Natural killer cell (primary cell): ENCODE measurements at regions of chr9 and their contacts with region 1.

Region 1: GRCh38 chr9:136564379-136564988 is 18.6 kb upstream of the NOTCH1 start:
- DNase-seq: peak in 1 of 2 donors; percentile 52
- ATAC-seq: peak; percentile 82 to 90 (median 83)
- H3K4me3 ChIP-seq: no peak overlapping the region
- H3K4me3 Mint-ChIP-seq: peak overlapping the region; percentile 58
- H3K27ac ChIP-seq: peak overlapping the region; percentile 60
- H3K27ac Mint-ChIP-seq: peak overlapping the region; percentile 62 to 75
- H3K4me1 ChIP-seq: peaks cover 74% of the 10 kb centered on the region
- H3K4me1 Mint-ChIP-seq: peaks cover 21 to 45% of the 10 kb centered on the region in 2 donors
- H3K27me3 ChIP-seq: no peaks in the 10 kb centered on the region
- H3K27me3 Mint-ChIP-seq: no peaks in the 10 kb centered on the region
- CTCF ChIP-seq: no peak

Region 2: DNA sequence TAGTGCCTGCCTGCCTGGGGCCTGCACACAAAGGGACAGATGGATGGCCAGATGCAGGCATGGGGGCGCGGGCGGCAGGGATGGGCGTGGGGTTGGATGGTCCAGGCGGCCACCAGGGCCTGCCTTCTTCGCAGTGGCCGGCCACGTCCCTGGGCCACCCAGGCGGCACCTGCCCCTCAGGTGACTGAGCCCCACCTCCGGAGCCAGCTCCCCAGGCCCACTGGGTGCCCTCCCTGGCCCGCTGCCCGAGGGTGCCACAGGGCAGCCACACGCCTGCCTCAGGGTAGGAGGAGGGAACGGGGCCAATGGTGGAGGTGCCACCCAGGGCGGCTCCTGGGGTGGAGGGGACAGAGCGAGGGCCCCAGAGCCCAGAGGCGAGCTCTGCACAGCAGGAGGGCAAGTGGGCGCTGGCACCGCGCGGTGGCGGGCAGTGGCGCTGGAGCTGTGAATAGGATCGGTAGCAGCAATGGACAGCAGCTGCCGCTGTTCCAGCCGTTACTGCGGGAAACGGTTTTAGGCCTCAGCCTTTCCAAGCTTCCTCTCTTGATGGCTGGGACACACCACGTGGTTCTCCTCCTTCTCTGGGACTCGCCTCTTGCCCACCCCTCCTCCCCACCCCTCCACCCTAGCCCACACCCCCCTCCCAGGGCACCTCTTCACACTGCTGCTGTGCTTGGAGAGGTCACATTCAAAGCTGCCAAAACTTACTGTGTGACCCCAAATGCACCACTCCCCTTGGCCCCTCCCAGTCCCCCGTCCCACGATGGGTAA is 378.7 kb before region 1 on chr9:
- intact Hi-C with region 1: no loop called
- DNase-seq: no peak
- ATAC-seq: no peak
- H3K4me3 ChIP-seq: no peak overlapping the region
- H3K4me3 Mint-ChIP-seq: no peak overlapping the region
- H3K27ac ChIP-seq: no peak overlapping the region
- H3K27ac Mint-ChIP-seq: no peak overlapping the region
- H3K4me1 ChIP-seq: no peaks in the 10 kb centered on the region
- H3K4me1 Mint-ChIP-seq: no peaks in the 10 kb centered on the region
- H3K27me3 ChIP-seq: no peaks in the 10 kb centered on the region
- H3K27me3 Mint-ChIP-seq: peaks cover 3 to 18% of the 10 kb centered on the region in 2 donors
- CTCF ChIP-seq: no peak

Region 3: DNA sequence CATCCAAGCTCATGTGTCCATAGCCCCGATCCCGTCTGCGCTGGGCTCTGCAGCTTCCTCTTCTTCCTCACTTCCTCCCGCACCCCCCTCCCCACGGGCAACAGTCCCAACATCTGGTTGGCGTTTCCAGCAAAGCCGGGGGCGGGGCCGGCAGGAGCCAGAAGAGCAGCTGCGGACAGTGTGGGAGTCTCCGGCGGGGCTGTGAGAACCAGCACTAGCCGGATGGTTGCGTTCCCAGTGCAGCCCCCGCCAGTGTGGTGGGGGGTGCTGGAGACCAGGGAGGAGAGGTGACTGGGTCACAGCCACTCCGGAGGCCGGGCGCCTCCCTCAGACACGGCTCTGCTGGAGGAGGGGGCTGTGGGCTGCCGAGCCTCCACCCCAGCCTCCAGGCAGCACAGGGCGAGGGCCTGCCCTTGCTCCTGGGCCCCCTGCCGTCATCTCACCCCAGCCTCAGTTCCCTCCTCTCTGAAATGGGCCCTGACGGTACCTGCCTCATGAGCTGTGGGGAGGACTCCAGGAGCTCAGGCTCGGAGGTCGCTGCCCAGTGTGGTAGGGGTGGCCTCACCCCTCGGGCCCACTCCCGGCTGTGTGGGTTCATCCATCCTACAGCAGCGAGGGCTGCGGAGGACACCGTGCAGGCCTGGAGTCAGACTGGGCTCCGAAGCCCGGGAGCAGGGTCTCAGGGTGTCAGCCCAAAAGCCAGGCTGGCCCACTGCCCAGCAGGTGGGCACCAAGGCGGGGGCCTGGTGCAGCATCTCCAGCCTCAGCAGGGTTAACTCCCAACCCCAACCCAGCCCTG is 22.9 kb after region 1 on chr9:
- intact Hi-C with region 1: no loop called
- DNase-seq: no peak
- ATAC-seq: no peak
- H3K4me3 ChIP-seq: no peak overlapping the region
- H3K4me3 Mint-ChIP-seq: no peak overlapping the region
- H3K27ac ChIP-seq: no peak overlapping the region
- H3K27ac Mint-ChIP-seq: no peak overlapping the region
- H3K4me1 ChIP-seq: peaks cover 29% of the 10 kb centered on the region
- H3K4me1 Mint-ChIP-seq: peaks cover 7 to 13% of the 10 kb centered on the region in 2 donors
- H3K27me3 ChIP-seq: no peaks in the 10 kb centered on the region
- H3K27me3 Mint-ChIP-seq: no peaks in the 10 kb centered on the region
- CTCF ChIP-seq: no peak

Region 4: DNA sequence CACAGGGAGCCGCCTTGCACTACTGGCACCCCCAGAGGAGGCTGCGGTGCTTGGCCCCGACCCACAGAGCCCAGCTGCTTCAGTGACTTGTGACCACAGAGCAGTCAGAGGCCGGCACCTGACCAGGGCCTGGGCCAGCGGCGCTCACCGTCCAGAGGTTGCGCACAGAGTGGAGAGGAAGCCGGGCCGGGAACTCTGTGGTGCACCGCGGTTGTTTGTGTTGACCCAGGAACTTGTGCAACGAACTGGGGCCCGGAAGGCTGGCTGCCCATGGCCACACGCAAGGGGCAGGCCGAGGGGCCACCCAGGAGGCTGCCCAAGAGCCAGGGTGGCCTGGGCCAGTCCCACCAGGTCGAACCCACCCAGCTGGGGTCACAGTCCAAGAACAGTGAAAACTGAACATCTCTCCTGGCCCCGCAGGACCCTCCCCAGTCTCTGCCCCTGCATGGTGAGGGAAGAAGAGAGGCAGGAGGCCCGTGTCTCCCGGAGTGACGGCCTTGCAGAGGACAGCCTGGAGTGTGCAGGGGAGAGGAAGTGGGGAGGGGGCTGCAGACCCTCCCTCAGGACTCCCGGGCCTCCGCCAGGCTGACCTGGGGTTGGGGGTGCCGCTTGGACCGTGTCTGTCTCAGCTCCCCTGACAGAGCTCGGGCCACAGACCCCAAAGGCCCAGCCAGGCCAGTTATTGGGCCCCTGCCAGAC is 55.4 kb after region 1 on chr9:
- intact Hi-C with region 1: loop called (anchors 10 kb)
- DNase-seq: peak; percentile 27 to 46
- ATAC-seq: peak; percentile 29 to 86 (median 59)
- H3K4me3 ChIP-seq: no peak overlapping the region
- H3K4me3 Mint-ChIP-seq: peak overlapping the region; percentile 84
- H3K27ac ChIP-seq: peak overlapping the region; percentile 87
- H3K27ac Mint-ChIP-seq: peak overlapping the region; percentile 87 to 89
- H3K4me1 ChIP-seq: peaks cover 86% of the 10 kb centered on the region
- H3K4me1 Mint-ChIP-seq: peaks cover 48 to 61% of the 10 kb centered on the region in 2 donors
- H3K27me3 ChIP-seq: no peaks in the 10 kb centered on the region
- H3K27me3 Mint-ChIP-seq: no peaks in the 10 kb centered on the region
- CTCF ChIP-seq: no peak

Region 5: DNA sequence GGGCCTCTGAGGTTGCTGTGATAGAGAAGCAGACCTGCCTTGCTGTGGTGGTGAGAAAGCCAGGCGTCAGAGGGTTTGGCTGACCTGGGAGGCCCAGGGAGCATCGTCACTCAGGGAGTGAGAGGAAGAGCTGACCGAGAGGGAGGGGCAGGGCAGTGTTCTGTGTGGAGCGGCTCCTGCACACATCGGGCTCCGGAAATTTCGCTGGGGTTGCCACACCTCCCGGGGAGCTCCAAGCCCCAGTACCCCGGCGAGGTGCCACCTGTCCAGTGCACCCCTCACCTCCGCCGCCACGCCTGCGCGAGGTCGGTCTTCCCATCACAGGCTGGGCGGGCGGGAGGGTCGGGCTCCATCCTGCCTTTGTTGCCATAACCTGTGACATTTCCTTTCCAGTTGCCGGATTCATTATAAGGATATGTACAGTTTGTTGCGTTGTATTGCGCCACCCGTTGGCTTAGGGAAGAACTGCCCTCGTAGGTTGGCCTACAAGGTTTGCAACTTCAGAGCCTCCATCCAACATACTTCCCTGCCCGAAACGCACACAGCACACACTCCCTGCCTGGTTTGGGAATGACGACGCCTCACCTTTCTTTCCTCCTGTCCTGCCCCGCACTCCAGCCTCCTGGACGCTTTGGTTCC is 1536.3 kb after region 1 on chr9:
- intact Hi-C with region 1: no loop called
- DNase-seq: no peak
- ATAC-seq: no peak
- H3K4me3 ChIP-seq: no peak overlapping the region
- H3K4me3 Mint-ChIP-seq: no peak overlapping the region
- H3K27ac ChIP-seq: no peak overlapping the region
- H3K27ac Mint-ChIP-seq: no peak overlapping the region
- H3K4me1 ChIP-seq: no peaks in the 10 kb centered on the region
- H3K4me1 Mint-ChIP-seq: no peaks in the 10 kb centered on the region
- H3K27me3 ChIP-seq: no peaks in the 10 kb centered on the region
- H3K27me3 Mint-ChIP-seq: no peaks in the 10 kb centered on the region
- CTCF ChIP-seq: no peak